ENCODE measurements at regions of chr15 and their contacts with region 1.

Region 1: DNA sequence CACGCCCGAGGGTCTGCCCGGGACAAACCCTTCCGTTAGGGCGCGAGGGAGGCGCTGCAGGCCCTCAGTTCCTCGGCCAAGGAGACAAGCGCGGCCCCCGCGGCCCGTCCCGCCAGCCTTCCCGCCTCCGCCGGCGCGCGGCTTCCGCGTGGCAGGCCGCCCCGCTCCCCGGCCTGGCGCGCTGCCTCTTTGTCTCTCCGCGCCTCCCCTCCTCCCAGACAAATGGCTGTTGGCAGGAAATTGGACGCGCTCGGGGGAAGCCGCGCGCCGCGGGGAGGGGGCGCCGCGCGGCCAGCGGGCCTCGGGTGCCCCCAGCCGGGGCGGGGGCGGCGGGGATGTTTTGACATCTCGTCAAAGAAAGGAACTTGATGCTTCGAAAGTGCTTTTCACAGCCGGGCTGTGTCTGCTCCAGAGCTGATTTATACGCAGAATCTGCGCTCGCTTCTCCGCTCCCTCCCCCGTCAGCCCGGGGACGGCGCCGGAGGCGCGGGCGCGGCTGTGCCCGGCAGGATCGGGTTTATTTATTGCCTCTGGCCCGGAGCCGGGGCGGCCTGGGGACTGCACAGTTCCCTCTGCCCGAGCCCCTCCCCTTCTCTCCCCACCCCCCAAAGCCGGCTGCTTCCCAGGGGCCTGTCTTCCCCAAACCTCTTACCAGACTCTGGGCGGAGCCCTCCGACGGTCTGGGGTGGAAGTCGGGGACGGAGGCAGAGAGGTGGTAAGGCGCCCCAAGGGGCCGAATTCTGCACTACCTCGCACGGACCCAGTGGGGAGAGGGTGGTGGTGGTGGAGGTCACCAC is 20.7 kb downstream of the SHF start:
- DNase-seq: peak; percentile 96

Region 2: DNA sequence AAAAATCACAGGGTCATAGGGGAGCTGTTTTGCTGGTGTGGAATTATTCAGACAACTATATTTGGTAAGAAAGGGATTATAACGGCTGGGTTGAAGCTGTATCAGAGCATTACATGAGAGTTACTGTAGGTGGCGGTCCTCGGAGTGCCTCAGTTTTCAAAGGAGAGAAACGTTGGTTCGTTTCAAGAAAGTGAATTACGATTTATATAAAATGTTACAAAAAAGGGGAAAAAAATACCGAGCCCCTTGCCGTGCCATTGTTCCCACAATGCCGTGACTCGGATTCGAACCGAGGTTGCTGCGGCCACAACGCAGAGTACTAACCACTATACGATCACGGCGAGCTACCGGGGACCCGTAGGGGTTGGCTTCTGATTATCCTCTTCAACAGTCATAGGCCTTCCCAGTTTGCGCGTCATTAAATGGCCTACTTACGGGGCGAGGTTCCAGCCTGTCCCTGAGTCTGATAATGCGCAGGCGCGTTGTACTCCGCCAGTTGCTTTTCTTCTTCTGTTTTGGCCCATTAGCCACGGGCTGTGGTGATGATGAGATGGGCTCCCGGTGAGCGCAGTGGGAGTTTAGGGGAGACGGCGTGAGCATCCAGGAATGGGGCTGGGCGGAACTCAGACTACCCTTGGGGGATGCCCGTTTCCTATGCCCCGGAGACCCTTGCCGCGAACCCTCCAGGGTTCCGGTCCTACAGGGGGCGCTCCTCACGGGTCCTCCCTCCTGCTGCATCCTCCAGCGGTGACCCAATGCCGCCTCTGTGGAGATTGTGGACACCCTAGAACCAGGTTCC is 31.5 kb after region 1 on chr15:
- intact Hi-C with region 1: loop called in 1 of 2 experiments (anchors 5 kb)
- DNase-seq: peak; percentile 97

Region 3: GRCh38 chr15:45402162-45402954 is 235.3 kb after region 1 on chr15:
- intact Hi-C with region 1: loop called in 1 of 2 experiments (anchors 2 kb)
- DNase-seq: peak; percentile 99

Region 4: DNA sequence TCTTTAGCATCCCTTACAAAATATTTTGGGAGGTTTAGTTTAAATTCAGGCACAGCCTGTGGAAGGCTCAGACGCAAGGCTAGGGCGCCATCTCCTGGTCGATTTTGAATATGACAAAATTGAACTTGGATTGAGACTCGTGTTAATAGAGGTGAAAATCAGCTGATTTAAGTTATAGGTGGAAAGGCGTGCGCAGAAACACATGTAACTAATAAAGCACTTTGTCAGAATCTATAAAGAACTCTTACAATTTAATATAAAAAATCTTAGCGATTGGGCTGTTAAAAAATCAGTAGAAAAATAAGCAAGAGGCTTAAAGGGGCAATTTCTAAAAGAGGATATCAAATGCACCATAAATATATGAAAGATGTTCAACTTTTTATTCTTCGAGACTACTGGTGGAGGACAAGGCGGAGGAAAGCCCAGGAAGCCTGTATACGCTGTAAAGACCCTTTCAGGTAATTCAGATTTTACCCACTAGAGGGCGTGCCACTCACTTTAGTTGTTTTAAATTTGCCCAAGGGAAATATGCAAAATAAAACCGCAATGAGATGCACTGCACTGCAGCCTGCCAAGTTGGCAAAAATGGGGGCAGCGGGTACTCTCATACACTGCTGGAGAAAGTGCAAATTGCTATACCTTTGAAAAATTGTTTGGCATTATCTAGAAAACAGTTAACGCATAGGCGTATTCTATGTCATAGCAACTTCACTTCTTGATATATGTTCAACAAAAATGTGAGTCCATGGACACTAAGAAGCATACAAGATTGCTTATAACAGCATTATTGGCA is 290.8 kb after region 1 on chr15:
- intact Hi-C with region 1: loop called in 1 of 2 experiments (anchors 10 kb)
- DNase-seq: no peak

Measured in posterior vena cava (tissue), 2 donors.